ENCODE measurements at regions of chr20 and their contacts with region 1.

Region 1: GRCh38 chr20:48620519-48621254 is 207.1 kb downstream of the PREX1 start:
- DNase-seq: peak; percentile 81 to 98 (median 90)

Region 2: DNA sequence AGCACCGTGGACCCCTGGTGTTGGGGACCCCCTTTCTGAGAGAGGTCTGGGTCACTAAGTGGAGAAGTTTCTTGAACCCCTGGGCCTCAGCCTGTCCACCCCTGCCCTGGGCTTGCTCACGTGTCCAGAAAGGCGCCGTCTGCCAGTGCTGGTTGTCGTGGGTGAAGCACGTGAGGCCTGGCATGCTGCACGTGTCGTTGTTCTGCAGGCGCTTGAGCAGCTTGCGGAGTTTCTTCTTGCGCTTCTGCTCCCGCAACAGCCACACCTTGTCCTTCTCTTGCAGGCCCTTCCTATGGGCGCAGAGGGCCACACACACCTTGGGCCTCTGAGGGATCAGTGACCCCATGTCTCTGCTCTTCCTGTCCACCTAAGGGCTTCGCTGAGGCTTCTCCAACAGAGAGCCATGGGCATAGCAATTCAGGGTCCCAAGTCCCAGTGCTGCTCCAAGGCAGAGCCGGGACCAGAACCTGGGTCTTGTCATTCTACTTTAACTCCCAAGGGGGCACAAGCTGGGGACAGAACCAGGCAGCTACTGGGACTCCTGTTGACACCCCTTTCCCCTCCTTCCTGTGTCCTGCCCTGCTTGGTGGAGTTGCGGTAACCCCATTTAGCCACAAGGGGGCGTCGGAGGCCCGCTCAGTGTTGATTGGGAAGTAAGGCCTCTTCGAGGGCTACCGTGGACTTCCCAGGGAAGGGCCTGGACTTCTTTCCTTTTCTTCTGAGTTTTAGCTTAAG is 957.2 kb before region 1 on chr20:
- intact Hi-C with region 1: loop called (anchors 1 kb)
- DNase-seq: peak; percentile 58 to 97 (median 87)

Region 3: DNA sequence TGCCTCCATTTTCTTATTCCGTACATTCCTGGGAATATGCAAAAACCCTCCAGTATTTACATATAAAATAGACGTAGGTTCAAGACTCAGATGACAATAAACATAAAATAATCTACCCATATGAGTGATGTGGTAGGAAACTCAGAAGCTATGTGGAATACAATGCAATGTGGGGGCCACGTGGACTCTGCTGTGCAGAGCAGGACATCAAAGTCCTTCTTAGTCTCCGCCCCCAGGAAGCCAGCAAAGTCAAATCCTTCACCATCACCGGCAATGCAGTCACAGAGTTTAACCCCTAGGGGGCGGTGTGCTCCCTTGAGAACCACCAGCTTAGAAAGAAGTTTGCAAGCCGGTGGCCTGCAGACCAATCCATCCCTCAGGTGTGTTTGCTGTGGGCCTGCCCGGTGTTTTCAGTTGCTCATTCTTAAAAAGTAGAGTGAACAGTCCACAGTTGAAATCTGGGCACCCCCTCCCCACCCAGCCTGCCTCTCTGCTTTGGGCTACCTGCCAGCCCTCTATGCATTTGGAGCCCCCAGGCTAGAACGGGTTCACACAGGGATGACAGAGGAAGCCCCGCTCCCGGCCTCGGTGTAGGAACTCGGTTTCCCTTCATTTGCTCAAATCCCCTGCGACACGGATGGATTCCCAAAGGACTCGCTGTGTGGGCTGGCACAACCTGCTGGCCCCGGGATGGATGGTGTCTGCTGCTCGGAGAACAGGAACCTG is 895.3 kb before region 1 on chr20:
- intact Hi-C with region 1: loop called (anchors 5 kb)
- DNase-seq: peak; percentile 38 to 94 (median 64)

Measured in posterior cingulate gyrus (tissue), 11 donors.